ENCODE measurements at regions of chr14 and their contacts with region 1.

Region 1: DNA sequence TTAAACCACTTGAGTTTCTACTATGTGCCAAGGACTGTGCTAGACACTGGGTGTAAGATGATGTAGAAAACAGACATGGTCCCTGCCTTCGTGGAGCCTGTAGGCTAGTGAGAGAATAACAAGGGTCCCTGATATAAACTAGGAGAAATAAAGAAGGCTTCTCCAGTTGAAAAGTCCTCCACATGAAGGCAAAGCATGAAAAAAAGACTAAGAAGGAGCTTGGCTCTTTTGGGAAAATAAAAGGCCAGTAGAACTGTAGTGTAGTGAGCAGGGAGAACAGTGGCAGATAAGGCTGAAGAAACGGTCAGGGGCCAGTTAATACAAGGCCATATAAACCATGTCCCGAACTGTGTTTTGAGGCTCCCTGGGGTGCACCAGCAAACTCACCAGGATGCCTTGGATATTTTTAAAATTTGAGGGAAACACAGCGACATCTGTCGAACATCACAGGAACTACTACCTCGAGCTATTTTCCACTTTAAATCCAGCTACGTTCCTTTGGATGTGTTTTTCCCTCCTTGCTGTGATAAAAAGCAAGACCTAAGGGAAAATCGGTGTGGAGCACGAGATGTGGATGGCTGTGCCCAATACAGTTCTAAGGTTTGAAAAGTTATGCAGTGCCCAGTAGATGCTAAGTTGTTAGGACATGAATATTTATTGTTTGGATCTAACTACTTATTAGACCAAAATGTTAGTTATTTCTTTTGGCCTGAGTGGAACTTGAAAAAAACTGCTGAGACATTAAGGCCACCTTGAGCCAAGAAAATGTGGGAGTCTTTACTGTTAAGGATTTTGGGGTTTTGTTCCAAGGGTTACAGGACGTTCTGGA is 8.5 kb upstream of the CFL2 start:
- H3K4me3 ChIP-seq: no peak overlapping the region
- H3K27ac ChIP-seq: no peak overlapping the region
- H3K4me1 ChIP-seq: no peaks in the 10 kb centered on the region
- CTCF ChIP-seq: no peak; the same call in 1 of the 2 replicates

Region 2: GRCh38 chr14:34671716-34672115 is 51.2 kb before region 1 on chr14:
- CTCF ChIA-PET with region 1: interaction called, 40 read pairs
- POLR2A ChIA-PET with region 1: interaction called, 3 read pairs
- H3K4me3 ChIP-seq: no peak overlapping the region
- H3K27ac ChIP-seq: no peak overlapping the region
- H3K4me1 ChIP-seq: no peaks in the 10 kb centered on the region
- CTCF ChIP-seq: no peak